K562 (cell line): ENCODE measurements at regions of chr9 and their contacts with region 1.

Region 1: DNA sequence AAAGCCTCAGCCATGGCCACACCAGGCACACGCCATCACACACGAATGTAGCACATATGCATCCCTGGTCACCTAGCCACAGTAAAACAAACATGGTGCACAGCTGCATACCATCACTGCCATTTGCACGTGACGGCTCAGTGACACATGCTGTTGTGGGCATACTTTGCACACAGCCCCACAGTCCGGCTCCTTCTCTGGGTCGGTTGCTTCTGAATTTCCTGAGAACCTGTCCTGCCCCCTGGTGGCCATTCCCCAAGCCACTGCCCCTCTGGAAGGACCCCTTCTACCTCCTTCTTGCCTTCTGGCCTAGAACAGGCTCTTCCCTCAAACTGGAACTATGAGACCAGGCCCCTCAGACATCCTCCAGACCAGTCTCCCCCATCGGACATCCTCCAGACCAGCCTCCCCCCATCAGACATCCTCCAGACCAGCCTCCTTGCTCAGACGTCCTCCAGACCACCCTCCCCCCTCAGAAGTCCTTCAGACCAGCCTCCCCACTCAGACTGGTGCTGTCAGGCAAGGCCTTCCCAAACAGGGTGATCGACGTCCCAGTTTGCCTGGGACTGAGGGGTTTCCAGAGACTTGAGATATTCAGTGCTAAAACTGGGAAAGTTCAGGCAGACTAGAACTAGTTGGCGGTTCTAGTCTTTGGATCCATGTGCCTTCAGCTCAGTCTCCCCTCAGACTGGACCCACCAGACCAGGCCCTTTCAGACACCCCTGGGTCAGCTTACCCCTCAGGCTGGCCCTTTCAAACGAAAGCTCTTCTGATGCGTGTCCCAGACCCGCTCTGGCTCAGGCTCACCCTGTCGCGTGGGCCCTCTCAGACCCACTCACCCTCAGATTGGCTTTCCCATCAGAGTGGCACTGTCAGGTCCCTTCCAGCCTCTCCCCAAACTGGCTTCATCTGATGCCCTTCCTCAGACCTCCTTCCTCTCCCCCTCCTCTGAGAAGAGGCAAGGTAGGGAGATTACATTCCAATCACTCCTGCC is 24.3 kb upstream of the ENHO start:
- DNase-seq: peak; percentile 50 to 68 (median 57)
- ATAC-seq: peak; percentile 93
- H3K4me3 ChIP-seq: no peak overlapping the region
- H3K27ac ChIP-seq: no peak overlapping the region
- H3K4me1 ChIP-seq: no peaks in the 10 kb centered on the region
- H3K27me3 ChIP-seq: peaks cover 0 to 12% of the 10 kb centered on the region in 2 experiments; a peak in 2 of 5 replicates
- CTCF ChIP-seq: peak; percentile 71 to 74 (median 74)
- EP300 ChIP-seq: no peak
- POLR2A ChIP-seq: no peak
- RAD21 ChIP-seq: peak; percentile 51 to 68

Region 2: DNA sequence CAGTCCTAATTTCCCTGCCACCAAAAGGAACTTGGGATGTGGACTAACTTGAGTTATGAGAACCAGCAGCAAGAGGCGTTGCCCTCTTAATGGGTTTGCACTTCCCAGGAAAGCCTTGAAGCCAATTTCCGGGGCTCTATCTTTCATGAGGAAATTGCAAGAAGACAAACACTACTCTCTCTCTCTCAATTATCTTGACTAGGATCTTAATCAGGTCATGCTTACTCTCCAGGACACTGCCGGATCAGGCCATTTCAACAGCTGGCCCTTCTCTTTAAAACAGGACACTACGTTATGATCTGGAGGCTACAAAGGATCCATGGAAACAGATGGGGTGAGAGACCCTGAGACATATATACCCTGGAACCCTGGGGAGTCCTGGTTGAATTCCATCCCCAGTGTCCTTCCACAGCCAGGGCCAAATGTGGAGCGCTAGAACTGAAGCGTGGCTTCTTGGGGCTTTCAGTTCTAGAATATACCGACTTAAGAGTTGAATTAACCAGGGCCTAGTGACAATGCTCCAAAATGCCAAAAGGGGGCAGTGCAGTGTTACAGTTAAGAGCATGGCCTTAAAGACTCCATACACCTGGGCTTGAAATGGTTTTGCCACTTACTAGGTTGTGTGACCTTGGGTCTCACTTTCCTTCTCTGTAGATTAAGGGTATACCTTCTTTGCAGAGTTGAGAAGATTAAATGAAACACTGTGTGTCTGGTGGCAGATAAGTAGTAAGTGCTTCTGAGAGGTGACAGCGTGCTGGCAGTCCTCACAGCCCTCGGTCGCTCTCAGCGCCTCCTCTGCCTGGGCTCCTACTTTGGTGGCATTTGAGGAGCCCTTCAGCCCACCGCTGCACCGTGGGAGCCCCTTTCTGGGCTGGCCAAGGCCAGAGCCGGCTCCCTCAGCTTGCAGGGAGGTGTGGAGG is 109.9 kb before region 1 on chr9:
- CTCF ChIA-PET with region 1: interaction called, 3 read pairs
- POLR2A ChIA-PET with region 1: no interaction called
- in situ Hi-C with region 1: no loop called
- intact Hi-C with region 1: loop called (anchors 1 kb)
- DNase-seq: peak; percentile 26 to 76 (median 41)
- ATAC-seq: peak; percentile 90
- H3K4me3 ChIP-seq: no peak overlapping the region
- H3K27ac ChIP-seq: no peak overlapping the region
- H3K4me1 ChIP-seq: no peaks in the 10 kb centered on the region
- H3K27me3 ChIP-seq: no peaks in the 10 kb centered on the region
- CTCF ChIP-seq: peak; percentile 72 to 88 (median 77)
- EP300 ChIP-seq: no peak
- POLR2A ChIP-seq: no peak
- RAD21 ChIP-seq: peak; percentile 63 to 81

Region 3: DNA sequence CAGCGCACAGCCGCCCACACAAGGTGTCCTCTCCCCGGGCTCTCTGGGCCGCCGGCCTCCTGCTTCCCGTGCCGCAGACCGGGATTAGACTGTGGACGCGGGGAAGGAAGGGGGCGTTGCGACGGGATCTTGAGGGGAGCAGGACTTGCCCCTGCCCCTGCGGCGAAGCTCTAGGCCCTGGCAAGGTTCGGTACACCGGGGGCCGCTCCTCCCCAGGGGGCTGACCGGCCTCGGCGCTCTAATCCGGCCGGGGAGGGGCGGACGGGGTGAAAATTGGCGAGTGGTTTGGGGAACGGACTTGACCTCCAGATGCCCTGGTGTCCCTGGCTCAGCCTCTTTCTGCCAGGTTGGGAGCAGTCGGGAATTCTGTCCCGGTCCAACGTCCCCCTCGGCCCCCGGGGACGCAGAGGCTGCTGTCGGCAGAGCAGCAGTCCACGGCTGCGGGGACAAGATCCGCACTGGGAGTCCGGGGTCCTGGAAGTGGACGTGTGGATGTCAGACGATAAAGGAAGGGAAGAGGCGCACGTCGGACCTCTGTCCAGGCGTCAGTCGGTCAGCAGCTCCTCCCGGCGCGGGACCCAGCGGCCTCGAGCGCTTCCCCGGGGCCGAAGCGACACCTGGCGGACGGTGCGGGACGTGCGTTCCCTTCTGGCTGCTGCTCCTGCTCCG is 44.3 kb after region 1 on chr9:
- CTCF ChIA-PET with region 1: interaction called, 9 read pairs
- POLR2A ChIA-PET with region 1: interaction called, 3 read pairs
- in situ Hi-C with region 1: no loop called
- intact Hi-C with region 1: loop called (anchors 1 kb)
- DNase-seq: peak; percentile 79 to 84 (median 81)
- ATAC-seq: peak; percentile 99
- H3K4me3 ChIP-seq: no peak overlapping the region
- H3K27ac ChIP-seq: no peak overlapping the region
- H3K4me1 ChIP-seq: peaks cover 0 to 34% of the 10 kb centered on the region in 2 experiments; a peak in 2 of 5 replicates
- H3K27me3 ChIP-seq: peaks cover 10 to 47% of the 10 kb centered on the region in 2 experiments
- CTCF ChIP-seq: peak; percentile 67 to 93 (median 85)
- EP300 ChIP-seq: no peak
- POLR2A ChIP-seq: no peak
- RAD21 ChIP-seq: peak; percentile 63 to 90

Region 4: DNA sequence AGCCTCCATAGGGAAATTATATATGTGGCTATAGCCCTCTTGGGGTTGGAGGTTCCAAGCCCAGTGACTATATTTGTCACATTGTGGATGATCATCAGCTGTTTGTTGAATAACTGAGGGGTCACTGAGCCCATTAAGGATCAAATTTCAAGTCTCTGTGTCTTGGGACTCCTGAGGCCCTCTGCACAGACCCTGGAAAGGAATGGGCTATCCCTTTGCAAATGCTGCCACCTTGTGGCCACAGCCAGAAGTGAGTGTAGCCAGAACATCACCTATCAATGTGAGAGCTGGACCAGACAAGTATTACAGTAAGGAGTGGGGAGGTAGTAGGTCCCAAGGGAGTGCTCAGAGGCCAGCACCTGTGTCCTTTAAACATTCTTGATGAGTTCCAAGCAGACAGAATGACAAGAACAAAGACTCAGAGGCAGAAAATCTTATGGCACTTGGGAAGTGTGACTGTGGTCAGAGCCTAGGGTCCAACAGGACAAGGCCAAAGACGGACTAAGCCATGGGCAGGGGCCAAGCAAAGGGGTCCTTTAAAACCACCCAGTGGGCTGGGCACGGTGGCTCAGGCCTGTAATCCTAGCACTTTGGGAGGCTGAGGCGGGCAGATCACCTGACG is 56.6 kb after region 1 on chr9:
- CTCF ChIA-PET with region 1: interaction called, 3 read pairs
- POLR2A ChIA-PET with region 1: no interaction called
- in situ Hi-C with region 1: no loop called
- intact Hi-C with region 1: loop called (anchors 1 kb)
- DNase-seq: peak; percentile 75 to 81 (median 78)
- ATAC-seq: peak; percentile 93
- H3K4me3 ChIP-seq: no peak overlapping the region
- H3K27ac ChIP-seq: no peak overlapping the region
- H3K4me1 ChIP-seq: peaks cover 0 to 7% of the 10 kb centered on the region in 2 experiments; a peak in 2 of 5 replicates
- H3K27me3 ChIP-seq: no peaks in the 10 kb centered on the region
- CTCF ChIP-seq: peak; percentile 75 to 86 (median 84)
- EP300 ChIP-seq: no peak
- POLR2A ChIP-seq: no peak
- RAD21 ChIP-seq: peak; percentile 71 to 87

Region 5: DNA sequence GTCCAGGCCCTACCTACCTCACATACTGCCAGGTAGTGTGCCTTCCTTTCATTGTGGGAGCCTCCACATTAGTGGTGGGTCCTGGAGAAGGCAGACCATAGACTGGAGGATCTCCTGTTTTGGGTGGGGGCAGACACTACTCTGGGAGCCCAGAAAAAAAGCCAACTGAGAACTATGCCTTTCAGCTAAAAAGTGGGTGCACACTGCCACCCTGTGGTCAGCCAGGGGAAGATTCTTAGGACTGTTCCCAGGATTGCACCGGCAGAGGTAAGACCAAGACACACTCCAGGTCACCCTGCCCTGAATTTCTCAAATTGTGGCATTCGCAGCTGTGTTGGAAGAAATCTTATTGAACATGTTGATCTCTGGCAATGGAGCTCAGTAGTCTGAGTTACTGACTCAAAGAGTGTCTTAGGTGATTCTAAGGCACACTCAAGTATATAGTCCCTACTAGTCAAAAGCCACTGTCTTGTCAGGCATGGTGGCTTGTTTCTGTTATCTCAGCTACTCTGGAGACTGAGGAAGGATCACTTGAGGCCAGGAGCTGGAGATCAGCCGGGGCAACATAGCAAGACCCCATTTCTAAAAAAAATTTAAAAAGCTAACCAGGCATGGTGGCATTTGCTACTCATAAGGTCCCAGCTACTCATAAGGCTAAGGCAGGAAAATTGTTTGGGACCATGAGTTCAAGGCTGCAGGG is 86.9 kb after region 1 on chr9:
- CTCF ChIA-PET with region 1: interaction called, 11 read pairs
- POLR2A ChIA-PET with region 1: no interaction called
- in situ Hi-C with region 1: no loop called
- intact Hi-C with region 1: no loop called
- DNase-seq: peak; percentile 57 to 75 (median 67)
- ATAC-seq: peak; percentile 78
- H3K4me3 ChIP-seq: no peak overlapping the region
- H3K27ac ChIP-seq: no peak overlapping the region
- H3K4me1 ChIP-seq: peaks cover 5 to 27% of the 10 kb centered on the region in 2 experiments; a peak in 4 of 5 replicates
- H3K27me3 ChIP-seq: peaks cover 4 to 17% of the 10 kb centered on the region in 2 experiments; a peak in 4 of 5 replicates
- CTCF ChIP-seq: peak; percentile 74 to 82 (median 81)
- EP300 ChIP-seq: no peak
- POLR2A ChIP-seq: no peak
- RAD21 ChIP-seq: peak; percentile 47 to 72